ENCODE measurements at regions of chr16 and their contacts with region 1.

Region 1: DNA sequence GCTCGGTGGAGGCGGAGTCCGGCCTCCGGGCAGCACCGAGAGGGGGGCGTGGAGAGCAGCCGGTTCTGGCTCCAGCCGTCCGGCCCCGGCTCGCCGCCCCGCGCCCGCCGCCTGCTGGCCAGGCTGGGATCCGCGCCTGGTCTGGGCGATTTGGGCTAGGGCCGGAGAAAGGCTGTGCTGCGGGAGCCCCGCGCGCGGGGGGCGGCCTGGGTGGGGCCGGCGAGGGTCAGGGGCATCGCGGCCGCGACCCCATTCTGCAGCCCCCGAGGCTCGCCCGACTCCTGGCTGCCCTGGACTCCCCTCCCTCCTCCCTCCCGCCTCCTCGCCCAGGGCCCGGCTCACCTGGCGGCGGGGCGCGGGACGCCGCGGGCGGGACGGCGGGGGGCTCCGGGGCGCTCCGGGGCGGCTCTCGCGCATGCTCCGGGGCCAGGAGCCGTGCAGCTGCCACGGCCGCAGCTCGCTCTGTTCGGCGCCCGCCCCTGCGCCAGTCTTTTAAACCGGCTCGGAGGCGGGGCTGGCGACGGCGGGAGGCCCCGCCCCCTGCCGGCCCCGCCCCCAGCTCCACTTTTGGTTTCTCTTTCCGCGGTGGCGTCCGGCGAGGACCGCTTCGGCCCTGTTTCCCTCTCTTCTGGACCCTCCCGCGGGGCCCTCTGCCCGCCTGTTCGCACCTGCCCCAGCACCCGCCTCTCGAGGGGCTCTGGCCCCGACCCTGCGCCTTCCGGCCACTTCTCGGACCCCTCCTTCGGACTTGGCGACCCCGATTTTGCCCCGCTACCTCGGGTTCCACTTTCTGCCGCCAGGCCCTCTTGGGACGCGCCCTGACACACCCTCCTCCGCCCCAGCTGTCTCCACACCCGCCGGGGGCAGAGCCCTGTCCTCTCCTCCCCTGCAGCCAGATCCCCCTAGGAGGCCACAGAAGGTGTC is at the start of gene SOCS1:
- DNase-seq: peak; percentile 90 to 92 (median 91)
- ATAC-seq: peak; percentile 80
- H3K4me3 ChIP-seq: peak within 1 kb of the TSS; percentile 63
- H3K4me1 ChIP-seq: peaks cover 18% of the 10 kb centered on the region
- CTCF ChIP-seq: peak; percentile 88
- total RNA-seq, gene SOCS1: 4.0 to 6.5 (median 4.1) TPM

Region 2: DNA sequence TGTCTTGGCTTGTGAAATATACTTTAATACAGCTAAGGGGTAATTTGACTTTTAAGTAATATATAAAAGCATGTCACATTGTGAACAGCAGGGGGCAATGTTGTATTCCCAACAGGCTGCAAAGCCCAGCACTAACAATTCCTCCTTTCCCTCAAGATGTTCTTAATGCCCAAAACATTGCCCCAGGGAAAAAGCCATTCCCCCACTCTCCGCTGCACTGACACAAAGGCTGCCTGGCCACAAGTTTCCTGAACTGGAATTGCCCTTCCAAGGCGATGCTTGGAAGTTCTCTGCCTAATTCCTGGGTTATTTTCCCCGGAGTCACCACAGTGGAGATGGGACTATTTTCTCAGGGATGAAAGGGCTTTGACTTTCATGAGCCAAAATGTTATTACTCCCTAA is 284.4 kb before region 1 on chr16:
- intact Hi-C with region 1: loop called (anchors 5 to 10 kb)
- DNase-seq: peak in 1 of 3 donors; percentile 81
- ATAC-seq: peak; percentile 83
- H3K4me3 ChIP-seq: no peak overlapping the region
- H3K4me1 ChIP-seq: no peaks in the 10 kb centered on the region
- CTCF ChIP-seq: peak; percentile 39

Region 3: GRCh38 chr16:11470676-11471415 is 214.8 kb after region 1 on chr16:
- intact Hi-C with region 1: no loop called
- DNase-seq: no peak
- ATAC-seq: no peak
- H3K4me3 ChIP-seq: no peak overlapping the region
- H3K4me1 ChIP-seq: no peaks in the 10 kb centered on the region
- CTCF ChIP-seq: no peak